Activated CD4-positive, alpha-beta memory T cell treated with anti-CD3 and anti-CD28 coated beads for 36 hours (primary cell): ENCODE measurements at regions of chr2 and their contacts with region 1.

Region 1: DNA sequence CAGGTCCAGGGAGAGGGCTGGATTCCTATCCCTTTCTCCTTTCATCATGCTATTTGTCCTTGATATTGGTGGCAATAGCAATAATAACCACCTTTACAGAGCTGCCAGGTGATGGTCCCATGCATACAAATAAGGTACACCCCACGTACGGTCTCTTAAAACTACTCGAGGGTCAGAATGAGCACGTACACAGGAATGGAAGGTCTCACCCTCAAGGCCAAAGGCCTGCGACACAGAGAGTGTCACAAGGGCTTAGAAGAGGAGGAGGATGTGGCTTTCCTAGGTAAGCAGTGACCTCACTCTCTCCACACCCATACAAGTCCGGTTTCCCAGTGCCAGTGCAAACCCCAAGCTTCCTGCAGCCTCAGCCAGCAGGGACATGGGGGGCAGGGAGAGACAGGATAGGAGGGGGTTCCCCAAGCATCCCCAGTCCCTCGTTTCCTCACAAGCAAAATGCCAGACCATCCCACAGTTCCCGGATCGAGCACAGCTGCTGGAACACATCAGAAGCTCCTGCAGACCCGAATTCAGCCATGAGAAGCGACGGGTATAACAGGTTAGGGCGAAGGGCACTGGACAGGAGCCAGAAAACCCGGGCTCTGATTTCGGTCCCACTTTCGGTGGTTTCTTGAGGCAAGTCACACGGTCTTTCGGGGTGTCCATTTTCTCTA is 49.2 kb downstream of the PLB1 start:
- DNase-seq: peak; percentile 62
- H3K4me3 Mint-ChIP-seq: no peak overlapping the region
- H3K27ac Mint-ChIP-seq: peak overlapping the region; percentile 71
- H3K4me1 Mint-ChIP-seq: peaks cover 33% of the 10 kb centered on the region
- H3K27me3 Mint-ChIP-seq: no peaks in the 10 kb centered on the region

Region 2: DNA sequence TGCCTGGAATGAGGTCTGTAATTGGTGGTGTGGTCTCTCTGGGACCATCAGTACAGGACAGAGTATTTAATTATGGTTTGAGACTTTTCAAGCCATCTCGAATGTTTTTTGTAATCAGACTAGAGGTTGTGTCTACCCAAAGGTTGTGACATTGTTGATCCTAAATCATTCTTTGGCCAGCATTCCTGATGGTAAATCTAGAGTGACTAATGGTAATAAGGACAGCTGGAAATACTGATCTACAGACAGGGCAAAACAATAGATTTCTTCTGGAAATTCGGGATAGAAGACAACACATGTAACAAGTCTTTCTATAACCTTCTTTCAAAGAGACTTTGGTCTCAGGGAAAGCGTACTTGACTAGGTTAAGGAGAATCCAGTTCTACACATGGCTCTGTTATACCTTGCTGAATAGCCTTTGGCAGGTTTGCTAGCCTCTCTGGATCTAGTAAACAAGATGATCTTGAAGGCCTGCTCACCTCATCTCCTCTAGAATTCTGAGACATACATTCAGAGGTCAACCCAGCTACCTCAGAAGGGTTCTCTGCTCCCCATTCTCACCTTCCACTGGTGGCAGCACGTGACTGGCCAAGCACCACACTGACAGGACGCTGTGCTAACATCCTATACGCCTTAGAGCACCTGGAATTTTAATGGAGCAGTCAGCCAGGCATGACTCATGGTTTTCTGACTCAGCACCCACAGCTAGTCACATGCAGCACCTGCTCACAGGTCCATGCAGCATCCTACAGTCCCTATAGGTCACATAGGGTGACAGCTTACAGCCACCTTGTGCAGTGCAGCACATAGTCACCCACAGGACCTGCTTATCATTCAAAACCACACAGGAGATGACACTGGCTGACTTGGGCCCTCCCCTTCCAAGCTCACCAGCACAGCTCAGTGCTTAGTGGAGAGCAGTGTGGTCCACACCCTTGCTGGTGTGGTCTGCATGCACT is 37.0 kb before region 1 on chr2:
- CTCF ChIA-PET with region 1: no interaction called
- POLR2A ChIA-PET with region 1: no interaction called
- intact Hi-C with region 1: loop called (anchors 2 kb)
- DNase-seq: peak; percentile 59
- H3K4me3 Mint-ChIP-seq: no peak overlapping the region
- H3K27ac Mint-ChIP-seq: no peak overlapping the region
- H3K4me1 Mint-ChIP-seq: peaks cover 16% of the 10 kb centered on the region
- H3K27me3 Mint-ChIP-seq: peaks cover 9% of the 10 kb centered on the region